Left colon (tissue), 2 donors: ENCODE measurements at regions of chr7 and their contacts with region 1.

Region 1: GRCh38 chr7:8217200-8218068 is 44.5 kb downstream of the ICA1 start:
- DNase-seq: no peak
- ATAC-seq: peak; percentile 51

Region 2: GRCh38 chr7:7595451-7595850 is 622.0 kb before region 1 on chr7:
- intact Hi-C with region 1: loop called in 1 of 2 experiments (anchors 10 kb)
- DNase-seq: no peak
- ATAC-seq: peak; percentile 53

Region 3: GRCh38 chr7:7662527-7662926 is 554.9 kb before region 1 on chr7:
- intact Hi-C with region 1: loop called in 1 of 2 experiments (anchors 10 kb)
- DNase-seq: no peak
- ATAC-seq: no peak

Region 4: GRCh38 chr7:8035647-8036518 is 181.6 kb before region 1 on chr7:
- intact Hi-C with region 1: no loop called
- DNase-seq: no peak
- ATAC-seq: peak; percentile 82